Psoas muscle (tissue), 8 donors: ENCODE measurements at regions of chr12 and their contacts with region 1.

Region 1: GRCh38 chr12:117836999-117837736 is 131.6 kb downstream of the KSR2 start:
- DNase-seq: peak; percentile 73 to 85
- ATAC-seq: peak; percentile 60 to 84 (median 62)
- H3K4me3 ChIP-seq: no peak overlapping the region
- H3K27ac ChIP-seq: no peak overlapping the region
- H3K4me1 ChIP-seq: no peaks in the 10 kb centered on the region
- H3K27me3 ChIP-seq: peaks cover 0 to 20% (median 2%) of the 10 kb centered on the region in 3 donors
- CTCF ChIP-seq: peak; percentile 96

Region 2: GRCh38 chr12:117212563-117213190 is 624.5 kb before region 1 on chr12:
- intact Hi-C with region 1: loop called (anchors 2 to 10 kb)
- DNase-seq: peak; percentile 52 to 68
- ATAC-seq: peak; percentile 68 to 94 (median 86)
- H3K4me3 ChIP-seq: no peak overlapping the region
- H3K27ac ChIP-seq: no peak overlapping the region
- H3K4me1 ChIP-seq: peaks cover 7% of the 10 kb centered on the region
- H3K27me3 ChIP-seq: no peaks in the 10 kb centered on the region
- CTCF ChIP-seq: peak; percentile 78

Region 3: DNA sequence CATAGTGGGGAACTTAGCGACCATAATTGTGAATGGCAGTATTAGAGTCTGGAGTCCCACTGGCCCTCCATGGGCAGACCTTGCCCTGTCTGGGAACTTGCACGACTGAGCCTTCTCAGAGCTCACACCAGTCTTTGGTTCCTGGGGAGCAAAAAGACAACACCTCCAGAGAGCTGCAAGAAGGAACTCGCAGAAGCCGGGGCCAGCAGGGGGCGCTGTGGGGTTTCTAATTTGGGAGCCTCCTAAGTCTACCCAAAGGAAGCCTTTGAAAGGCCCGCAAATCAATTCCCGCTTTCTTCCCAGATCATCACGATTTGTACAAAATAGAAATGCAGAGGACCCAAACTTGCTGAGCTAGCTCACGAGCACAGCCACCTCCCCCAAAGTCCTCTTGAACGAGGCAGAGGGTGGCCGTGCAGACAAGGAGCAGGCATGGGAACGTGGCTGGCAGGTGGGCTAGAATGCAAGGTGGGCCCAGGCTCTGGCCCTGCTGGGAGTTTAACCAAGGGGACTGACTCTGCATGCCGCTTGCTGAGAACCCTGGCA is 600.6 kb before region 1 on chr12:
- intact Hi-C with region 1: loop called in 1 of 2 experiments (anchors 5 kb)
- DNase-seq: peak; percentile 76 to 88
- ATAC-seq: peak; percentile 52 to 78 (median 62)
- H3K4me3 ChIP-seq: no peak overlapping the region
- H3K27ac ChIP-seq: no peak overlapping the region
- H3K4me1 ChIP-seq: no peaks in the 10 kb centered on the region
- H3K27me3 ChIP-seq: no peaks in the 10 kb centered on the region
- CTCF ChIP-seq: peak; percentile 79

Region 4: GRCh38 chr12:117367011-117367638 is 470.0 kb before region 1 on chr12:
- intact Hi-C with region 1: loop called (anchors 1 to 5 kb)
- DNase-seq: peak; percentile 54 to 72
- ATAC-seq: peak; percentile 79 to 87 (median 83)
- H3K4me3 ChIP-seq: no peak overlapping the region
- H3K27ac ChIP-seq: no peak overlapping the region
- H3K4me1 ChIP-seq: no peaks in the 10 kb centered on the region
- H3K27me3 ChIP-seq: peaks cover 0 to 4% (median 0%) of the 10 kb centered on the region in 3 donors
- CTCF ChIP-seq: peak; percentile 90

Region 5: DNA sequence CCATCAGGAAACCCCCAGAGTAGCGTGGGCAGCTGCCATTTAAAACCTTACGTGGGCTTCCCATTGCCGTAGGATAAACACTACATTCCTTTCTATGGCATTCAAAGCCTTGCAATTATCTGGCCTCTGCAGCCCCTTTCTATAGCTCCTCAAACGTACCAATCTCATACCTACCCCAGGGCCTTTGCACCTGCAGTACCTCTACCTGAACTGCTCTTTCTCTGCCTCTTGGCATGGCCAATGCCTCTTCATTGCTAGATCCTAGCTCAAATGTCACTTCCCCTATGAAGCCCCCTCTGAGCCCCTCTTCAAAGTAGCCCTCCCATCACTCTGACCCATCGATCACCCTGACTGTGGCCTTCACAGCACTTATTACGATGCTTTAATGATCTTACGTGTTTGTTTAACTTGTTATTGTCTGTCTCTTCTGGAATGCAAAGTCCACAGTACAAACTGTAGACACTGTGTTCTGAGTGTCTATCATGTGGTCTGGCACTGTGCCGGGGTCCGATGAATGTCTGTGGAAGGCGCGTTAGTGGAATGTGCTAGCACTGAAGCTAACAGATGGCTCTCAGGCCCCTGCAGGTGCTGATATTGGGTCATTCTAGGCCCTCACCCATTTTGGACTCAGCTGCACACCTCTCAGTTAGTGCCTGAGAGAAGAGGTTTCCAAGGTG is 318.4 kb before region 1 on chr12:
- intact Hi-C with region 1: no loop called
- DNase-seq: peak; percentile 37 to 75
- ATAC-seq: peak in 3 of 4 donors; percentile 55 to 70 (median 55)
- H3K4me3 ChIP-seq: no peak overlapping the region
- H3K27ac ChIP-seq: no peak overlapping the region
- H3K4me1 ChIP-seq: peaks cover 19% of the 10 kb centered on the region
- H3K27me3 ChIP-seq: no peaks in the 10 kb centered on the region
- CTCF ChIP-seq: no peak

Region 6: DNA sequence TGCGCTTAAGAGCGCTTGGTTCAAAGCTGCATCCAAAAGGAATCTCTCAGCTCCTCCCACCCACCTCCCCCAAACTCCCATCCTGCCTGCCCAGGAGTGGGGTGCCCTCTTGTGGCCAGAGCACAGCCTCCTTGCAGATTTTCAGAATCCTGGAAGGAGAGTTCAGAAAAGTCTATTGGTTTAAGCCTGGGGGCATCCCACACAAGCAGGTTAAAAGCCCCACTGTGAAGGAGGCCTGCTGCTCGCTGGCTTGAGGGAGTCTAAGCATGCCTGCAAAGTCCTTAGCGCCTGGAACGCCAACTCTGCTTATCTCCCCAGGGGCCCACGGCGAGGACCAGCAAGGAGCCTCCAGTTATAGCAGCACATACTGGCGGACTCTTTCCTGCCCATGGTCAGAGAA is 165.4 kb before region 1 on chr12:
- intact Hi-C with region 1: loop called in 1 of 2 experiments (anchors 5 kb)
- DNase-seq: peak in 1 of 2 donors; percentile 23
- ATAC-seq: peak in 2 of 4 donors; percentile 57 to 58
- H3K4me3 ChIP-seq: no peak overlapping the region
- H3K27ac ChIP-seq: no peak overlapping the region
- H3K4me1 ChIP-seq: no peaks in the 10 kb centered on the region
- H3K27me3 ChIP-seq: peaks cover 0 to 19% (median 3%) of the 10 kb centered on the region in 3 donors
- CTCF ChIP-seq: peak; percentile 42

Region 7: DNA sequence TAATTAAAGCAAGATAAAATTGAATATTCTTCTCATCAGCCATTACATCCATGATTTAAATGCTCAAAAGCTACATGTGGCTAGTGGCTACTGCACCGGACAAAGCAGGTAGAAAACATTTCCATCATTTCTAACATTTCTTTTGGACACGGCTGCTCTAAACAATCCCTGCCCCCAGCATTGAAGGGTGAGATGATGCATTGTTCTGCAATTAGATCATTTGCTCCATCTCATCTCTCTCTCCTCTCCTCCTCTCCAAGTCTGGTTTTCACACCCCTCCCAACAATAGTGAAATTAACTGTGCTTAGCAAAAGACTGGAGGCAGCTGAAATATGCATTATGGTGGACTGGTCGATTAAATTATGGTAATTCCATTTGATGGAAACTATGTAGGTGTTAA is 156.9 kb before region 1 on chr12:
- intact Hi-C with region 1: loop called in 1 of 2 experiments (anchors 5 kb)
- DNase-seq: no peak
- ATAC-seq: no peak
- H3K4me3 ChIP-seq: no peak overlapping the region
- H3K27ac ChIP-seq: no peak overlapping the region
- H3K4me1 ChIP-seq: no peaks in the 10 kb centered on the region
- H3K27me3 ChIP-seq: peaks cover 0 to 6% (median 2%) of the 10 kb centered on the region in 3 donors
- CTCF ChIP-seq: no peak